ENCODE measurements at regions of chr22 and their contacts with region 1.

Region 1: DNA sequence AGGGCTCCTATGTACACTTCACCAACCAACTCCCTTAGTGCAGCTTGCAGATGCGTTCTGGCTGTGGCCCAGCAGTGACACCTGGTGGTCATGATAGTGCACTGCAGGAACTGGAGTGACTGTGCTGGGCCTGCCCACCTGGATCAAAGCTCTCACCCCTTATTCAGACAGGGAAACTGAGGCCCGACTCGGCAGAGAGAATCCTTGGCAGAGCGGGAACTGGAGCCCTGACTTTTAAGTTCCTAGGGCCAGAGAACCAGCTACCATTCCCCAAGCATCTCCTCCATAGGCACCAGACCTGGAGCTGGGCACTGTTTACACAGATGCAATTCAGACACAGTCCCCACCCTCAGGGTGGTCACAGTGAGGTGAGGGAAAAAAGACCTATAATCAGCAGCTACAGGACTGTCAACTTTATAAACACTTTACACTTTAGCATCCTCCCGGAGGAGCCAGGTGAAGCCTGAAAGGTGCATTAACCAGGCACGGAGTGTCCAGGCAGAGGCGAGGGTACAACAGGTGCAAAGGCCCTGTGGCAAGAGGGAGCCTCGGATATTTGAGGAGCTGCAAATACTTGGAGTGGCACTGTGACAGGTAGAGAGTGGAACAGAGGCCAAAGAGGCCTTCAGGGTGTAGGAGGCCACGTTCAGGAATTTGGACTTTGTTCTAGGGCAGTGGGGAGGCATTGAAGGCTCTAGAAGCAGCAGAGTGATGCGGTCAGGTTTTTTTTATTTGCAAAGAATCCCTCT is 22.0 kb downstream of the RHBDD3 start:
- DNase-seq: peak; percentile 43 to 79 (median 66)
- ATAC-seq: peak; percentile 91
- H3K4me3 ChIP-seq: no peak overlapping the region
- H3K4me3 Mint-ChIP-seq: no peak overlapping the region
- H3K27ac ChIP-seq: no peak overlapping the region
- H3K27ac Mint-ChIP-seq: no peak overlapping the region
- H3K4me1 ChIP-seq: no peaks in the 10 kb centered on the region
- H3K4me1 Mint-ChIP-seq: no peaks in the 10 kb centered on the region
- H3K27me3 ChIP-seq: no peaks in the 10 kb centered on the region
- H3K27me3 Mint-ChIP-seq: peaks cover 20% of the 10 kb centered on the region
- CTCF ChIP-seq: peak; percentile 90

Region 2: GRCh38 chr22:28855355-28856094 is 390.3 kb before region 1 on chr22:
- CTCF ChIA-PET with region 1: interaction called, 3 read pairs
- POLR2A ChIA-PET with region 1: no interaction called
- intact Hi-C with region 1: loop called in 1 of 2 experiments (anchors 1 kb)
- DNase-seq: peak; percentile 4 to 76 (median 37)
- ATAC-seq: peak; percentile 59
- H3K4me3 ChIP-seq: no peak overlapping the region
- H3K4me3 Mint-ChIP-seq: no peak overlapping the region
- H3K27ac ChIP-seq: no peak overlapping the region
- H3K27ac Mint-ChIP-seq: no peak overlapping the region
- H3K4me1 ChIP-seq: no peaks in the 10 kb centered on the region
- H3K4me1 Mint-ChIP-seq: no peaks in the 10 kb centered on the region
- H3K27me3 ChIP-seq: no peaks in the 10 kb centered on the region
- H3K27me3 Mint-ChIP-seq: peaks cover 9% of the 10 kb centered on the region
- CTCF ChIP-seq: peak; percentile 94

Region 3: DNA sequence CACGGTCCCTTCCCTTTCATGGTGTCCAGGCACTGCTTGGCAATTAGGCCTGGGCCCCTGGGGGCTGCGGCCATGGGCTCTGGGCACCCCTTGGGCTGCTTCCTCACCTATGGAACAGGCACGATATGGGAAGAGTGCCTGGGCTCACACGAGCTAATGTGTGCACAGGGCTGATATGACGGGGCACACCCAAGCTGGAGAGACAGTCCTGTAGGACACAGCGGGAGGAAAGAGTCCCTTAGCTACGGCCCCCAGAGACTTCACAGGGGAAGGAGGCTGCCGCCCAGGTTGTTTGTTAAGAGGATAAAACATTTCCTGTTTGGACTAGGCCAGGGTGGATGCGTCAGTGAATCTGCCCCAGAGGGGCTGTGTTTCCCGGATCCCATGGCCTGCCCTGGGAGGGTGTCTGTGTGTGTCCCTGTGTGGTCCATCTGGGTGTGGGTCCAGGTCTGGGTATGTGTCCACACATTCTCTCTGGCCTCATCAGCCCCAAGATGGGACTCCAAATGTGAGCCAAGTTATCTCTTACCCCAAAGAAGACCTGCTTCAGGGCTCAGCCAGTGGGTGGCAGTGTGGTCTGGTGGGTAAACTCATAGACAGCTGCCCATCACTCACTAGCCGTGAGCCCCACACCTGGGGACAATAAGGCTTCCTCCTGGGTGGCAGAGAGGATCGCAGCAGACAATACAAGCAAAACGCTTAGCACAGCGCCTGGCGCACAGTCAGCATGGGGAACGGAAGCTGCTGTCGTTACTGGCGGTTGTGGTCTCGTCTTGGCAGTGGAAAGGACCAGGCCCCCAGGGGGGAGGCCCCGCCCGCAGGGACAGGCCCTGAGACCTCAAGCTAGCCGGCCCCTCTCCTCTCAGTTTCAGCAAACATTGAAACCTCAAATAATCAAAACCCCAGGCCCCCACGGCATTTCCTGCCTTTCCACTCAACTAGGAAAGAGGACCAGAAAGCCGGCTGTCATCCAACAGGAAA is 43.3 kb before region 1 on chr22:
- CTCF ChIA-PET with region 1: interaction called, 11 read pairs
- POLR2A ChIA-PET with region 1: no interaction called
- intact Hi-C with region 1: loop called in 1 of 2 experiments (anchors 2 kb)
- DNase-seq: peak in 8 of 9 experiments; percentile 31 to 69 (median 48)
- ATAC-seq: peak; percentile 48
- H3K4me3 ChIP-seq: no peak overlapping the region
- H3K4me3 Mint-ChIP-seq: no peak overlapping the region
- H3K27ac ChIP-seq: peak overlapping the region in 1 of 2 experiments; percentile 47
- H3K27ac Mint-ChIP-seq: peak overlapping the region; percentile 22
- H3K4me1 ChIP-seq: peaks cover 13% of the 10 kb centered on the region
- H3K4me1 Mint-ChIP-seq: peaks cover 25% of the 10 kb centered on the region
- H3K27me3 ChIP-seq: peaks cover 0 to 7% of the 10 kb centered on the region in 2 experiments
- H3K27me3 Mint-ChIP-seq: peaks cover 32% of the 10 kb centered on the region
- CTCF ChIP-seq: no peak

Region 4: GRCh38 chr22:29231971-29232959 is 13.5 kb before region 1 on chr22:
- CTCF ChIA-PET with region 1: interaction called, 21 read pairs
- POLR2A ChIA-PET with region 1: no interaction called
- intact Hi-C with region 1: no loop called
- DNase-seq: no peak
- ATAC-seq: no peak
- H3K4me3 ChIP-seq: no peak overlapping the region
- H3K4me3 Mint-ChIP-seq: no peak overlapping the region
- H3K27ac ChIP-seq: no peak overlapping the region
- H3K27ac Mint-ChIP-seq: no peak overlapping the region
- H3K4me1 ChIP-seq: no peaks in the 10 kb centered on the region
- H3K4me1 Mint-ChIP-seq: no peaks in the 10 kb centered on the region
- H3K27me3 ChIP-seq: no peaks in the 10 kb centered on the region
- H3K27me3 Mint-ChIP-seq: no peaks in the 10 kb centered on the region
- CTCF ChIP-seq: no peak

Measured in CD8-positive, alpha-beta T cell (primary cell).